Left cardiac atrium (tissue), 4 donors: ENCODE measurements at regions of chr19 and their contacts with region 1.

Region 1: GRCh38 chr19:13880059-13881043 is 3.4 kb downstream of the NANOS3 start:
- DNase-seq: peak; percentile 99
- ATAC-seq: peak; percentile 96

Region 2: DNA sequence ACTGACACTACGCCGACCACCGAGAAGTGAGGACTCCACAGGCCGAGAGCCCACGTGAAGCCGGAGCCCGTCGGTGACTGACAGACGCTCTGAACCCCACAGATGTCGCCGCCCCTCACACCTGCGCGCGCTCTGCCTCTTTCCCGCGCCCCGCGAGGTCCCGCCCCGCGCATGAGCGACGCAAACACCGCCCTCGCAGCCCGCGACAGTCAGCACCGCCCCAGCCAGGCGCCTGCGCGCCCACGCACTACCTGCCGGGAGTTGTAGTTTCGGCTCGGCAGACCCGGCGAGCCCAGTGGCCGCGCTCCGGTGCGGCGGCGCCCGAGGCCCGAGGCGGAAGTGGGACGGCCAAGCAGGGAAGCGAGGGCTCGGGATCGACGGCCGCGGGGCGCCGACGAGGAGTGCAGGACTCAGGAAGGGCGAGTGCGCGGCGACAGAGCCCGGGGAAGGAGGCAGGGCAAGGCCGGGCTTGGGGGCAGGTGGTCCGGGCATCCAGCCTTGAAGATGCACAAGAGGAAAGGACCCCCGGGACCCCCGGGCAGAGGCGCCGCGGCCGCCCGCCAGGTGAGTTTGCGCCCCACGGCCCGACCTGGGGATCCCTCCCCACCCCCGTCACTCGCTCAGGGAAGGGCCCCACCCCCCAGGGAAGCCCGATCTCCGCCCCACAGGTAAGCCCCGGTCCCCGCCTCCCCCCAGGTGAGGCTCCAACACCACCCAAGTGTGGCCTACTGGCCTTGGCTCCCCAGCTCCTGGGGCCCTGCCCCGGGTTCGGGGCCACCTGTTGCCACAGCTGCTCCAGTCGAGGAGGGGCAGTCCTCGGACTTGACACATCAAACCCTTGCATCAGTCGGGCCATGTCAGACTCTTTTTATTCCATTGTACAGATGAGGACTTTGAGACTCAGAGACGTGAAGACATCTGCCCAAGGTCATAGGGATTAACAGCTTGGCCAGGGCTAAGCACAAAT is 25.9 kb after region 1 on chr19 and contains the starts of genes BRME1 and CC2D1A:
- intact Hi-C with region 1: no loop called
- DNase-seq: peak; percentile 95
- ATAC-seq: peak; percentile 99 to 100
- total RNA-seq, gene BRME1: 0.62 to 1.1 TPM
- total RNA-seq, gene CC2D1A: 19.4 to 20.5 TPM

Region 3: GRCh38 chr19:13920940-13921761 is 40.8 kb after region 1 on chr19:
- intact Hi-C with region 1: no loop called
- DNase-seq: no peak
- ATAC-seq: peak; percentile 31 to 65

Region 4: GRCh38 chr19:13938301-13939064 is 58.1 kb after region 1 on chr19 and contains the start of gene PODNL1:
- intact Hi-C with region 1: no loop called
- DNase-seq: no peak
- ATAC-seq: peak; percentile 17 to 84
- total RNA-seq, gene PODNL1: 1.1 to 1.4 TPM

Region 5: DNA sequence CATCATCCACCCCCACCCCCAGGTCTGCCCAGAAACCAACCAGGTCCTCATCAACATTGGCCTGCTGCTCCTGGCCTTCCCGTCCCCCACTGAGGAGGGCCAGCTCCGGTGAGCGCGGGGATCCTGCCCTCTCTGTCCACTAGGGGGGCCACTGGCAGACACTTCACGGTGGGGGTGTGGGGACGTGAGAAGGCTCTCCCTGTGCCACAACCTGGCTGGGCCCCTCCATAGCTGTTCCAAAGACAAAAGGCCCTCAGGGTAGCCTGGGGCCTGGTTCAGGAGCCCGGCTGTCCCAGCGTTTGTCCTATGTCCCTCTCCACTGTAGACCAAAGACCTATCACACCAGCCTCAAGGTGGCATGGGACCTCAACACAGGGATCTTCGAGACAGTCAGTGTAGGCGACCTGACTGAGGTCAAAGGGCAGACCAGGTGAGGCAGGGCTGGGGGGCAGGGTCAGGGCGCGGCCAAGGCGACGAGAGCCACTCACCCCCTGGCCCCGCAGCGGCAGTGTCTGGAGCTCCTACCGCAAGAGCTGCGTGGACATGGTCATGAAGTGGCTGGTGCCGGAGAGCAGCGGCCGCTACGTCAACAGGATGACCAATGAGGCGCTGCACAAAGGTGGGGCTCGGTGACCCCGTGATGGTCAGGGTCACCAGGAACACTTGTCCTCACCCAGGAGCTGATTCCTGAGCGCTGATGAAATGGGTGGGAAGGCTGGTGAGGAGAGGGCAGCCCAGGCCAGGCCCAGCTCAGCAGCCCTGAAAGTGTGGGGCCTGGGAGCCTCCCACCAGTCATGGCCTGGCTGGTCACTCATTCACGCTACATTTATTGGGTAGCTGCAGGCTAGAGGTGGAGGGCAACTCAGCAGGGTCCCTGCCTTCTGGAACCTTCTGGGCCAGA is 79.9 kb after region 1 on chr19:
- intact Hi-C with region 1: loop called in 1 of 2 experiments (anchors 5 kb)
- DNase-seq: no peak
- ATAC-seq: peak in 1 of 2 donors; percentile 16

Region 6: DNA sequence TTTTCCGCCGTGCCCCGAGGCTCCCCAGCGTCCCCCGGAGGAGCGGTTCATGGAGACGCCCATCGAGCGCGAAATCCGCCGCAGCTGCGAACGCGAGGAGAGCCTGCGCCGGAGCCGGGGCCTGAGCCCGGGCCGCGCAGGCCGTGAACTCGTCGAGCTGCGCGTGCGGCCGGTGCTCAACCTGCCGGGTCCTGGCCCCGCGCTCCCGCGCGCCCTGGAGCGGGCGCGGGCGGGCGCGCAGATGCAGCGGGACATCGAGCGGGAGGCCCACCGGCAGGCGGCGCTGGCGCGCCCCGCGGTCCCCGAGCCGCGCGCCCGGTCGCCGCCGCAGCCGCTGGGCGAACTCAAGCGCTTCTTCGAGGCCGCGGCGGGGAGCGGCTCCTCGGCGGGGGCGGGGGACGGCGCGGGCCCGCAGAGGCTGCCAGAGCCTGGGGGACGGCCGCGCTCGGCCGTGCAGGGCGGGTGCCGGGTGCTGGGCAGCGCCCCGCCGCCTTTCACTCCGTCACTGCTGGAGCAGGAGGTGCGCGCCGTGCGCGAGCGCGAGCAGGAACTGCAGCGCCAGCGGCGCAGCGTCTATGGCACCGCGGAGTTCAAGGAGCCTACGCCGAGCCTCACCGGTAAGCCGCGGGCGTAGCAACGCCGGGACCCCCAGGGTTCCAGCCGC is 193.0 kb after region 1 on chr19:
- intact Hi-C with region 1: loop called (anchors 2 to 5 kb)
- DNase-seq: peak; percentile 82
- ATAC-seq: peak; percentile 34 to 55